ENCODE measurements at regions of chr2 and their contacts with region 1.

Region 1: GRCh38 chr2:197828464-197829135 is 24.2 kb downstream of the PLCL1 start:
- DNase-seq: no peak
- H3K4me3 ChIP-seq: no peak overlapping the region
- H3K27ac ChIP-seq: no peak overlapping the region
- H3K4me1 ChIP-seq: no peaks in the 10 kb centered on the region
- CTCF ChIP-seq: no peak

Region 2: DNA sequence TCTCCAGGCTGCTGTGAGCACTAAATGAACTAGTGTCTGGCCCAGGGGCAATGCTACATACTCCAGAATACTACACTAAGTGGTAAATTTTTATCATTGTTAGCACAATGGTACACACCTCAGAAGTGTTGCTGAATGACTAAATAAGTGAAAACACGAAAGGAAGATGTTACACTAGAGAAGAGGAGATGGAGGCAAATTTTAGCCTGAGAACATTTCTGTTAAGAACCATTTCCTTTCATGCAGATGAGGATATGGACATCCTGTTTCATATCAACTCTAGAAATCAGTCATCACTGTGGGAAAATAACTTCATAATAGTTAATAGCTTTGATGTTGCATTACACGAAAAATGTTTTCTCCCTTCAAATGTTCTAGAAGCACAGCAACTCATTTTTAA is 1539.6 kb before region 1 on chr2:
- CTCF ChIA-PET with region 1: no interaction called
- POLR2A ChIA-PET with region 1: no interaction called
- intact Hi-C with region 1: no loop called
- DNase-seq: peak; percentile 39
- H3K4me3 ChIP-seq: no peak overlapping the region
- H3K27ac ChIP-seq: no peak overlapping the region
- H3K4me1 ChIP-seq: peaks cover 12% of the 10 kb centered on the region
- CTCF ChIP-seq: no peak

Region 3: GRCh38 chr2:197850882-197851450 is 22.4 kb after region 1 on chr2:
- CTCF ChIA-PET with region 1: no interaction called
- POLR2A ChIA-PET with region 1: interaction called, 11 read pairs
- intact Hi-C with region 1: no loop called
- DNase-seq: no peak
- H3K4me3 ChIP-seq: no peak overlapping the region
- H3K27ac ChIP-seq: no peak overlapping the region
- H3K4me1 ChIP-seq: no peaks in the 10 kb centered on the region
- CTCF ChIP-seq: no peak